Activated naive CD4-positive, alpha-beta T cell treated with anti-CD3 and anti-CD28 coated beads, Interleukin-2, amount 10 ng/mL, durations not matched to agents 7 days and 5 days (primary cell): ENCODE measurements at regions of chr16 and their contacts with region 1.

Region 1: DNA sequence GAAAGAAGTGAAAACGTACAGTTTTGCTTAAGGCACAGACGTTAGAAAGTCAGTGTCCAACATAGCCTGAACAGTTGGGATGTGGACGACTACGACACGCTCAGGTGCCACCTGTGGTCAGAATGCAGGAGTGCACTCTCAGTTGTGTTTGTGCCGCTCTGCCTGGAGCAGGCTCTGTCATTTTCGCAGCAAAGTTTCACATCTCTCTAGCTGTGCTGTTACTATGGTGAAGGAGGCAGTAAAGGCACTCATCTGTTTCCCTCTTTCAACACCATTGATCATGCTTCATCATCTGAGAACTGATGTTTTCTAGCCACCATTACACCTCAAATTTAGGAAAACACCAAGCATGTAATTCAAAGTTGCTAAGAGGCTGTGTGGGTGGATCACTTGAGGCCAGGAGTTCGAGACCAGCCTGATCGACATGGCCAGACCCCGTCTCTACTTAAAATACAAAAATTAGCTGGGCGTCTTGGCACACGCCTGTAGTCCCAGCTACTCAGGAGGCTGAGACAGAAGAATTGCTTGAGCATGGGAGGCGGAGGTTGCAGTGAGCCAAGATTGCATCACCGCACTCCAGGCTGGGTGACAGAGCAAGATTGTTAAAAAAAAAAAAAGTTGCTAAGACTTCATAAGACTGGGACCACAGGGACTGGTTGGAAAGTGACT is 44.9 kb upstream of the DNAJA2 start:
- DNase-seq: peak; percentile 56
- H3K4me3 Mint-ChIP-seq: no peak overlapping the region
- H3K27ac Mint-ChIP-seq: no peak overlapping the region
- H3K4me1 Mint-ChIP-seq: peaks cover 21% of the 10 kb centered on the region
- H3K27me3 Mint-ChIP-seq: no peaks in the 10 kb centered on the region

Region 2: GRCh38 chr16:47037746-47038458 is 19.5 kb after region 1 on chr16:
- CTCF ChIA-PET with region 1: interaction called, 11 read pairs
- DNase-seq: peak; percentile 92
- H3K4me3 Mint-ChIP-seq: peak overlapping the region; percentile 69
- H3K27ac Mint-ChIP-seq: no peak overlapping the region
- H3K4me1 Mint-ChIP-seq: peaks cover 5% of the 10 kb centered on the region
- H3K27me3 Mint-ChIP-seq: peaks cover 42% of the 10 kb centered on the region